ENCODE measurements at regions of chr11 and their contacts with region 1.

Region 1: GRCh38 chr11:123020968-123021367 is 39.3 kb upstream of the BSX start:
- DNase-seq: peak in 5 of 9 experiments; percentile 5 to 61 (median 20)
- ATAC-seq: peak; percentile 77
- H3K4me3 ChIP-seq: no peak overlapping the region
- H3K4me3 Mint-ChIP-seq: no peak overlapping the region
- H3K27ac ChIP-seq: no peak overlapping the region
- H3K27ac Mint-ChIP-seq: no peak overlapping the region
- H3K4me1 ChIP-seq: no peaks in the 10 kb centered on the region
- H3K4me1 Mint-ChIP-seq: peaks cover 7% of the 10 kb centered on the region
- H3K27me3 ChIP-seq: peaks cover 0 to 2% of the 10 kb centered on the region in 2 experiments
- H3K27me3 Mint-ChIP-seq: peaks cover 2% of the 10 kb centered on the region
- CTCF ChIP-seq: peak; percentile 55

Region 2: DNA sequence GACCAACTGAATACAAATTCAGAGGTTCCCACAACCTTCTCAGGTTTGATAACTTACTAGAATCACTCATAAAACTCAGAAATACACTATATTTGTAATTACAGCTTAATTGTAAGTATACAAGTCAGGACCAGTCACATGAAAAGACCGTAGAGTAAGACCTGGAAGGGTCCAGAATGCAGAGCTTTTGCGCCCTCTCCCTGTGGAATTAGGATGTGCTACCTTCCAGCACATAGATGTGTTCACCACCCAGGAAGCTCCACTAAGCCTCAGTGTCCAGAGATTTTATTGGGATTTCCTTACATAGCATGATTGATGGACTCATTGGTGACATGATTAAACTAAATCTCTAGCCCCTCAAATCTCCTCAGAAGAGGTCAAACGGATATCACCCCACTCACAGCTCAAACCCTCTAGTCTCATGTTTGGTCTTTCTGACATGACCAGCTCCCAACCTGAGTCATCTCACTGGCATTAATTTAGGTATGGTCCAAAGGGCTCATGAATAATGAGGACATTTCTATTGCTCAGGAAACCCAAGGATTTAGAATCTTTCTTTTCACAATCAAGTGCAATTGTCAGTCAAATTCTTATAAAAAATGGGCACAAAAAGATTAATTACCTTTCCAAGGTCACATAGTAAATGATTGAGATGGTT is 442.7 kb before region 1 on chr11:
- CTCF ChIA-PET with region 1: interaction called, 8 read pairs
- POLR2A ChIA-PET with region 1: no interaction called
- intact Hi-C with region 1: loop called (anchors 1 to 2 kb)
- DNase-seq: no peak
- ATAC-seq: no peak
- H3K4me3 ChIP-seq: no peak overlapping the region
- H3K4me3 Mint-ChIP-seq: no peak overlapping the region
- H3K27ac ChIP-seq: no peak overlapping the region
- H3K27ac Mint-ChIP-seq: no peak overlapping the region
- H3K4me1 ChIP-seq: peaks cover 4% of the 10 kb centered on the region
- H3K4me1 Mint-ChIP-seq: peaks cover 7% of the 10 kb centered on the region
- H3K27me3 ChIP-seq: no peaks in the 10 kb centered on the region
- H3K27me3 Mint-ChIP-seq: no peaks in the 10 kb centered on the region
- CTCF ChIP-seq: no peak

Region 3: DNA sequence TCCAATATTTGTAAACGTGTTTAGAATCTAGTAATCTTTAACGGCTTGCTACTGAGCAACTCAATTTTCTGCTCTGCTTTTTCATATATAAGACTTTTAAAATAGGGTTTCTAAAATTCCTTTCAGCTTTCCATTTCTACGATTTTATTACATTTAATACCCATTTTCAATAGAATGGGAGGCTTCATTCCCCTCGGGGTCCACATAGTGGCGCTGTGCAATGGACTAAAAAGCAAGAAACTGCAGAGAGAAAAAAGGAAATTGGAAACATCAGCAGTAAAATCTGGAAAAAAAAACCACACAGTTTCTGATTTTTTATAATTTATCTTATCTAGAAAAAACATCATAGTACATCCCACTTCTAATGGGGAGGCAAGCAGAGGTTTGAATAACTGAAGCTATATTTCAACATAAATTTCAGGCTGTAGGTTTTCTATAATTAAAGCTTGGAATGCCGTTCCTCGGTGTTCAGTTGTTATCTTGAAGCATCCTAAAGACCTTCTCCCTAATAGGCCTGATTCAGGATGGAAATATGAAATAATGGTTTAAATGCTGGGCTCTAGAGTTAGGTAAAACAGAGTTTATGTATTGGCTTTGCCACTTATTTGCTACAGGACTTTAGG is 157.2 kb before region 1 on chr11:
- CTCF ChIA-PET with region 1: interaction called, 21 read pairs
- POLR2A ChIA-PET with region 1: interaction called, 4 read pairs
- intact Hi-C with region 1: loop called (anchors 1 to 2 kb)
- DNase-seq: peak in 6 of 9 experiments; percentile 10 to 56 (median 38)
- ATAC-seq: no peak
- H3K4me3 ChIP-seq: no peak overlapping the region
- H3K4me3 Mint-ChIP-seq: no peak overlapping the region
- H3K27ac ChIP-seq: no peak overlapping the region
- H3K27ac Mint-ChIP-seq: no peak overlapping the region
- H3K4me1 ChIP-seq: no peaks in the 10 kb centered on the region
- H3K4me1 Mint-ChIP-seq: peaks cover 12% of the 10 kb centered on the region
- H3K27me3 ChIP-seq: no peaks in the 10 kb centered on the region
- H3K27me3 Mint-ChIP-seq: no peaks in the 10 kb centered on the region
- CTCF ChIP-seq: peak; percentile 83

Region 4: DNA sequence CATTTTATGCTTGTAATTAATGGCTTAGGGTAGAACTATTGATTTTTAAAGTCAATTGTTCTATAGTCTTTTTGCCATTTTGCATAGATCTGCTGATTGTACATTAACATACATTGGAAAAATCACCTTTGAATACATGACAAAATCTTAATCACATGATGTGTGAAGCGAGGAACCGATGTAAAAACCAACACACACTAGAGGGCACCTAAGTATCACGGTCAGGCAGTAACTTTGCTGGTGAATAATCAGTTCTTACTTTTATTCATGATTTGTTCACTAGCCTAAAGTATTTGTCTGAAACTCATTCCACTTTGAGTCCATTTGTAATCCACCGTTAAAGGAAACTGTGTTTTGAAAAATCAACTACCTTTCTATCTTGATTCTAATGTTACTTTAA is 110.2 kb before region 1 on chr11:
- CTCF ChIA-PET with region 1: interaction called, 5 read pairs
- POLR2A ChIA-PET with region 1: no interaction called
- intact Hi-C with region 1: loop called in 1 of 2 experiments (anchors 1 kb)
- DNase-seq: peak in 2 of 9 experiments; percentile 4 to 23
- ATAC-seq: no peak
- H3K4me3 ChIP-seq: no peak overlapping the region
- H3K4me3 Mint-ChIP-seq: no peak overlapping the region
- H3K27ac ChIP-seq: no peak overlapping the region
- H3K27ac Mint-ChIP-seq: no peak overlapping the region
- H3K4me1 ChIP-seq: no peaks in the 10 kb centered on the region
- H3K4me1 Mint-ChIP-seq: no peaks in the 10 kb centered on the region
- H3K27me3 ChIP-seq: no peaks in the 10 kb centered on the region
- H3K27me3 Mint-ChIP-seq: no peaks in the 10 kb centered on the region
- CTCF ChIP-seq: no peak

Region 5: DNA sequence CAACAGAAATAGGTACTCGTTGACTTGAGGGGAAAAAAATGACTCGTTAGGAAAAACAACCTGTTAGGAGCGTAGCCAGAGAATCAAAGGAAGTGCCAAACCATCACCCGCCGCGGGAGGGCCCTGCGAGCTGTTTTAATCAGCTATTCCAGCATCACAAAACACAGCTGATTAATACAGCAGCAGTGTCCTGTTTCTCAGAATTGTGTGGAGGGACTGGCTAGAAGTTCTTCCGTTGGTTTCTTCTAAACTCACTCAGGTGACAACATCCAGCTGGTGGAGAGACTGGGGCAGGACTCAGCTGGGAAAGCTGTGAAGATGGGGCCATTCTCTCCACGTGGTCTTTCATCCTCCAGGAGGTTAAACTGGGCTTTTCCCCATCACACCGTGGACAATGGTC is 12.9 kb after region 1 on chr11:
- CTCF ChIA-PET with region 1: interaction called, 22 read pairs
- POLR2A ChIA-PET with region 1: interaction called, 3 read pairs
- intact Hi-C with region 1: no loop called
- DNase-seq: peak in 1 of 9 experiments; percentile 15
- ATAC-seq: no peak
- H3K4me3 ChIP-seq: no peak overlapping the region
- H3K4me3 Mint-ChIP-seq: no peak overlapping the region
- H3K27ac ChIP-seq: no peak overlapping the region
- H3K27ac Mint-ChIP-seq: no peak overlapping the region
- H3K4me1 ChIP-seq: no peaks in the 10 kb centered on the region
- H3K4me1 Mint-ChIP-seq: no peaks in the 10 kb centered on the region
- H3K27me3 ChIP-seq: peaks cover 0 to 2% of the 10 kb centered on the region in 2 experiments
- H3K27me3 Mint-ChIP-seq: no peaks in the 10 kb centered on the region
- CTCF ChIP-seq: no peak

Region 6: GRCh38 chr11:123045101-123045500 is 24.1 kb after region 1 on chr11:
- CTCF ChIA-PET with region 1: interaction called, 11 read pairs
- POLR2A ChIA-PET with region 1: no interaction called
- intact Hi-C with region 1: no loop called
- DNase-seq: no peak
- ATAC-seq: no peak
- H3K4me3 ChIP-seq: no peak overlapping the region
- H3K4me3 Mint-ChIP-seq: no peak overlapping the region
- H3K27ac ChIP-seq: no peak overlapping the region
- H3K27ac Mint-ChIP-seq: no peak overlapping the region
- H3K4me1 ChIP-seq: no peaks in the 10 kb centered on the region
- H3K4me1 Mint-ChIP-seq: no peaks in the 10 kb centered on the region
- H3K27me3 ChIP-seq: no peaks in the 10 kb centered on the region
- H3K27me3 Mint-ChIP-seq: no peaks in the 10 kb centered on the region
- CTCF ChIP-seq: no peak

Region 7: GRCh38 chr11:123188508-123189165 is 167.7 kb after region 1 on chr11:
- CTCF ChIA-PET with region 1: no interaction called
- POLR2A ChIA-PET with region 1: no interaction called
- intact Hi-C with region 1: no loop called
- DNase-seq: no peak
- ATAC-seq: no peak
- H3K4me3 ChIP-seq: no peak overlapping the region
- H3K4me3 Mint-ChIP-seq: no peak overlapping the region
- H3K27ac ChIP-seq: no peak overlapping the region
- H3K27ac Mint-ChIP-seq: no peak overlapping the region
- H3K4me1 ChIP-seq: peaks cover 18% of the 10 kb centered on the region
- H3K4me1 Mint-ChIP-seq: peaks cover 16% of the 10 kb centered on the region
- H3K27me3 ChIP-seq: no peaks in the 10 kb centered on the region
- H3K27me3 Mint-ChIP-seq: peaks cover 37% of the 10 kb centered on the region
- CTCF ChIP-seq: no peak

Measured in CD8-positive, alpha-beta T cell (primary cell).